CD8-positive, alpha-beta T cell (primary cell): ENCODE measurements at regions of chr9 and their contacts with region 1.

Region 1: DNA sequence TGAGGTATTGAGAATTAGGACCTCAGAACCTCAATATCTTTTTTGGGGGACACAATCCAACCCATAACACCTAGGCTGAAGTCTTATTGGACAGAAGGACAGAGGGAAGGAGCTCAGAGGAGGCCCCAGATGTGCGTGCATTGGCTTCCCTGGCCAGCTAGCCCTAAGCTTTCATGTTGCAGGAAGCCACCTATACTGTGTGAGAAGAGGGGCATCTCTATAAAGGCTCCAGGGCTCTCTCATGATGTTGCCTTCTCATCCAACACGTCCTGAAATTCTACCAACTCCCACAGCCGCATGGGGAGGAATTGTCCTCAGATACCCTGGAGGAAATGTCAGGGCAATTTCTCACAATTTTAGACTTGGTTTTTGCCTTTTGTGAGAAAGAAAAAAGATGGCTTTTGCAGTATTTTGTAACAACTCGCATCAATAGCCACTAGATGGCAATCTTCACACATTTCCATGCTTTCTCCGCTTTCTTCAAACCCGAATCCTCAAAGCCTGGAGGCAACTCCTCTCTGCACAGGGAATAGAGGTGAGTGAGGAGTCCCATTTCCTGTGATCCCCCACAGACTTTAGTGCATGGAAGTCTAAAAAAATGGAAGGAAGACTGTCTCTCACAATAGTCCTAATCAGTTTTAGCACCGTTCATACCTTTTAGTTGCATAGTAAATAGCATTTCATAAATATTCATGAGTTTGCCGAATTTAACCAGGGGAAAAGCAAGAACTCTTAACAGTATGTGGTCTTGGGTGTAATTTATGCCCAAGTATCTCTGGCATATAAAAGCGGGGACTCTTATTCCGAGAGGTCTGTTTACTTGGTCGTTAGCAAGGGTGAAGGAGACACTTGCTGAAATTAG is 7.4 kb upstream of the PPP3R2 start:
- DNase-seq: peak in 3 of 9 experiments; percentile 6 to 54 (median 38)
- ATAC-seq: peak; percentile 34
- H3K4me3 ChIP-seq: no peak overlapping the region
- H3K4me3 Mint-ChIP-seq: peak overlapping the region; percentile 55
- H3K27ac ChIP-seq: no peak overlapping the region
- H3K27ac Mint-ChIP-seq: no peak overlapping the region
- H3K4me1 ChIP-seq: peaks cover 5% of the 10 kb centered on the region
- H3K4me1 Mint-ChIP-seq: peaks cover 4% of the 10 kb centered on the region
- H3K27me3 ChIP-seq: no peaks in the 10 kb centered on the region
- H3K27me3 Mint-ChIP-seq: peaks cover 5% of the 10 kb centered on the region
- CTCF ChIP-seq: peak; percentile 70

Region 2: DNA sequence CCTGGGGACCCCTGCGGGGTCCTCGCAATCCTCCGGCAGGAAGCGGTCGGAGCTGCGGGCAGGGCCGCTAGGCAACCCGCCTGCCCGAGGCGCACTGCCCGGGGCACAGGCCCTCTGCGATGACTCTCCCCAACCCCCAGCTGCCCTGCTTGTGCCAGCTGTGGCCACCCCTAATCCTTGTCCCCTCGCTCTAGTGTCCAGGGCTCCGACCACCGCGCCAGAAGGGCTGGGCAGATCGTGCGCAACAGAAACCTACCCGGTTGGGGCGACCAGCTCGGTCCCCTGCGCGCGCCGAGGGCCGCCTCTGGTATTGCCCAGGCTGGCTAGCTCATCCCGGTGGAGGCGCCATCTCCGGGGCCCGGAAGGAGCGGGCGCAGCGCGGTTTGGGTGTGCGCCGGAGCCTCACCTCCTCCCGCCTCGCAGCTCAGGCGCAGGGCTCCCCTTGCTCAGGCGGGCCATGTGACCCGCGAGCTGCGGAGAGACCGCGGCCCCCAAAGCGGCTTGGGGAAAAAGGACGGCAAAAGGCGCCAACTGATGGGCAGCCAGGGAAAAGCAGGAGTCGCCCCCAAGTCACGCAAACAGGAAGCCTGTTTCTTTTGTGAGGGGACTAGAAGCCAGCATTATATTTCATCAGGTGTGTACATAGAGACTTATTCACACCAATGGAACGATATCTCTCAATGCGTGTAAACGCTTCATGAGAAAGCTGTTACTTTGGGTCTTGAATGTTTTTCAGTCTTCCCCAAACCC is 115.3 kb before region 1 on chr9:
- CTCF ChIA-PET with region 1: no interaction called
- POLR2A ChIA-PET with region 1: no interaction called
- intact Hi-C with region 1: no loop called
- DNase-seq: peak in 1 of 9 experiments; percentile 20
- ATAC-seq: no peak
- H3K4me3 ChIP-seq: no peak overlapping the region
- H3K4me3 Mint-ChIP-seq: no peak overlapping the region
- H3K27ac ChIP-seq: no peak overlapping the region
- H3K27ac Mint-ChIP-seq: no peak overlapping the region
- H3K4me1 ChIP-seq: no peaks in the 10 kb centered on the region
- H3K4me1 Mint-ChIP-seq: peaks cover 5% of the 10 kb centered on the region
- H3K27me3 ChIP-seq: peaks cover 0 to 5% of the 10 kb centered on the region in 2 experiments
- H3K27me3 Mint-ChIP-seq: peaks cover 56% of the 10 kb centered on the region
- CTCF ChIP-seq: no peak

Region 3: GRCh38 chr9:101727612-101728524 is 125.7 kb after region 1 on chr9:
- CTCF ChIA-PET with region 1: interaction called, 3 read pairs
- POLR2A ChIA-PET with region 1: no interaction called
- intact Hi-C with region 1: loop called in 1 of 2 experiments (anchors 1 kb)
- DNase-seq: peak in 2 of 9 experiments; percentile 11 to 33
- ATAC-seq: no peak
- H3K4me3 ChIP-seq: no peak overlapping the region
- H3K4me3 Mint-ChIP-seq: no peak overlapping the region
- H3K27ac ChIP-seq: no peak overlapping the region
- H3K27ac Mint-ChIP-seq: no peak overlapping the region
- H3K4me1 ChIP-seq: no peaks in the 10 kb centered on the region
- H3K4me1 Mint-ChIP-seq: no peaks in the 10 kb centered on the region
- H3K27me3 ChIP-seq: no peaks in the 10 kb centered on the region
- H3K27me3 Mint-ChIP-seq: peaks cover 10% of the 10 kb centered on the region
- CTCF ChIP-seq: peak; percentile 30

Region 4: GRCh38 chr9:102362470-102363132 is 760.5 kb after region 1 on chr9:
- CTCF ChIA-PET with region 1: no interaction called
- POLR2A ChIA-PET with region 1: no interaction called
- intact Hi-C with region 1: no loop called
- DNase-seq: no peak
- ATAC-seq: no peak
- H3K4me3 ChIP-seq: no peak overlapping the region
- H3K4me3 Mint-ChIP-seq: no peak overlapping the region
- H3K27ac ChIP-seq: no peak overlapping the region
- H3K27ac Mint-ChIP-seq: no peak overlapping the region
- H3K4me1 ChIP-seq: no peaks in the 10 kb centered on the region
- H3K4me1 Mint-ChIP-seq: no peaks in the 10 kb centered on the region
- H3K27me3 ChIP-seq: no peaks in the 10 kb centered on the region
- H3K27me3 Mint-ChIP-seq: no peaks in the 10 kb centered on the region
- CTCF ChIP-seq: no peak